Naive thymus-derived CD4-positive, alpha-beta T cell (primary cell): ENCODE measurements at regions of chr14 and their contacts with region 1.

Region 1: DNA sequence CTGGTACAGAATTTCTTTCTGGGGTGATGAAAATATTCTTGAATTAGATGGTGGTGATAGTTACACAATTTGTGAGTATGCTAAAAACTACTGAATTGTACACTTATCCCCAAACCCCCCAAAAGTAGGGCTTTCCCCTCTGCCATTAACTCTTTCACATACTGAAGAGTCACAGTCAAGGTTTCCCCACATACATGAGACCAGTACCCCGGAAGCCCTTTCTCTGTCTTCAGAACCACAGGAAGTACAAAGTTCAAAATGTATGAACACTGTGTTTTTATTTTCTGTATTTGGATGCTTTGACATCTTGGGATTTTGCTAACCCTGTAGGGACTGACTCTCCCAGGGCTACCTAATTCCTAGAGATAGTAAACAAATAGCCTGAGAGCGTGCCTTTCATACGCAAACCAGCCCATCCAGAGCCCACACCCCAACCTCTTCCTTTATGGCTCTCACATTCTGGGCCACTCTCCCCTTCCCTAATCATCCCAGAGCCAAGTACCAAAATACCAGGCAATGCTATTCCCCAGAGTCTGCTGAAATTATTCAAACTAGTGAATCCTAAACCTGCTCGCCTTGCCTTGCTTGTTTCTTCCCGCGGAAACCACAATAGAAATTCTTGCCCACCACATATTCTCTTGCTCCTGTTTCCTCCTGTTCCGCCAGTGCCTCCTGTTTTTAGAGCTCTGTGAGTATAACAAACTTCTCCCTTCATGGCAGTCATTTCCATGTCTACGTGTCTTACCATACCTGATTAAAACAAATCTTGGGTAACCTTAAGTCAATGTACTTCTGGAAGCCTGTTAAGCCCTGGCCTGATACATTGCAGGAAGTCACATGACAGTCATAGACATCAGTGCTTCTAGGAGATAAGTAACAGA is 524.8 kb downstream of the FUT8 start:
- DNase-seq: peak in 3 of 9 donors; percentile 5 to 25 (median 25)
- ATAC-seq: peak; percentile 32
- H3K4me3 ChIP-seq: no peak overlapping the region
- H3K4me3 Mint-ChIP-seq: peak overlapping the region; percentile 49 to 87 (median 80)
- H3K27ac ChIP-seq: no peak overlapping the region
- H3K27ac Mint-ChIP-seq: peak overlapping the region; percentile 76 to 95 (median 85)
- H3K4me1 ChIP-seq: peaks cover 22 to 24% of the 10 kb centered on the region in 2 donors
- H3K4me1 Mint-ChIP-seq: peaks cover 28 to 69% (median 52%) of the 10 kb centered on the region in 7 donors
- H3K27me3 ChIP-seq: no peaks in the 10 kb centered on the region
- H3K27me3 Mint-ChIP-seq: peaks cover 0 to 3% (median 0%) of the 10 kb centered on the region in 5 donors

Region 2: GRCh38 chr14:65791191-65791981 is 145.9 kb before region 1 on chr14:
- CTCF ChIA-PET with region 1: no interaction called
- POLR2A ChIA-PET with region 1: no interaction called
- intact Hi-C with region 1: no loop called
- DNase-seq: peak in 4 of 9 donors; percentile 1 to 9 (median 5)
- ATAC-seq: peak; percentile 79
- H3K4me3 ChIP-seq: no peak overlapping the region
- H3K4me3 Mint-ChIP-seq: no peak overlapping the region
- H3K27ac ChIP-seq: no peak overlapping the region
- H3K27ac Mint-ChIP-seq: no peak overlapping the region
- H3K4me1 ChIP-seq: no peaks in the 10 kb centered on the region
- H3K4me1 Mint-ChIP-seq: no peaks in the 10 kb centered on the region
- H3K27me3 ChIP-seq: no peaks in the 10 kb centered on the region
- H3K27me3 Mint-ChIP-seq: peaks cover 0 to 21% (median 5%) of the 10 kb centered on the region in 5 donors

Region 3: DNA sequence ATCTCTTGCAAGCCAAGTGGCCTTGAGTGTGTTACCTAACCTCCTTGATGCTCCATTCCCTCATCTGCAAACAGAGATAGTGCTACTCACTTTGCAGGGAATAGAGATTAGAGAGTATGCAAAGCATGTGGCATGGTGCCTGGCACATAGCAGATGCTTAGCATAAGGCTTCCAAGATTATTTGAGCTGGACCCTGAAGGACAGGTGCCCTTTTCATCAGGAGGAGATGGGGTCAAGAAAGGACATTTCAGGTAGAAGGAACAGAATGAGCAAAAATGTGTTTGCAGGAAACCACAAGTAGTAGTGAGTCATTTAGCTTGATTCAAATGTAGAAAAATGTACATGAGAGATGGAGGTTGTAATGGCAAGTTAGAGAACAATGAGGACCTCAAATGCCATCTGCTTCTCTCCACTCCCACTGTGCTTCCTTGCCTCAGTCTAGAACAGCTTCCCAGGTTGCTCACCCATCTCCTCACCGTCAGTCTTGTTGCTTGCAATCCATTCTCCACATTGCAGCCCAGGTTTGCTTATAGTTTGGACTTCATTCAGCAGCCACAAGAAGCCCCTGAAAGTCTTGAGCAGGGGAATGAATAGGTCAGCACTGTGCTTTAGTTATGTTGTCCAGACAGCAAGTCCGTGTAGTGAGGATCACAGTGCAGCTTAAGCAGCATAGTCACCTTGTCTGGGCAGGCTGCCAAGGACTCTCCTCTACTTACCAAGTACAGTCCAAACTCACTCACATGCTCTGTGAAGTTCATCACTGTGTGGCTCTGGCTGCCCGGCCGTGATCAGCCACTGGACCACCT is 12.6 kb after region 1 on chr14:
- CTCF ChIA-PET with region 1: interaction called, 5 read pairs
- POLR2A ChIA-PET with region 1: interaction called, 4 read pairs
- intact Hi-C with region 1: loop called in 1 of 2 experiments (anchors 2 kb)
- DNase-seq: peak in 1 of 9 donors; percentile 37
- ATAC-seq: no peak
- H3K4me3 ChIP-seq: no peak overlapping the region
- H3K4me3 Mint-ChIP-seq: peak overlapping the region in 5 of 10 donors; percentile 0 to 59 (median 11)
- H3K27ac ChIP-seq: no peak overlapping the region
- H3K27ac Mint-ChIP-seq: peak overlapping the region in 5 of 9 donors; percentile 28 to 85 (median 43)
- H3K4me1 ChIP-seq: peaks cover 12 to 13% of the 10 kb centered on the region in 2 donors
- H3K4me1 Mint-ChIP-seq: peaks cover 28 to 56% (median 35%) of the 10 kb centered on the region in 7 donors
- H3K27me3 ChIP-seq: no peaks in the 10 kb centered on the region
- H3K27me3 Mint-ChIP-seq: no peaks in the 10 kb centered on the region

Region 4: DNA sequence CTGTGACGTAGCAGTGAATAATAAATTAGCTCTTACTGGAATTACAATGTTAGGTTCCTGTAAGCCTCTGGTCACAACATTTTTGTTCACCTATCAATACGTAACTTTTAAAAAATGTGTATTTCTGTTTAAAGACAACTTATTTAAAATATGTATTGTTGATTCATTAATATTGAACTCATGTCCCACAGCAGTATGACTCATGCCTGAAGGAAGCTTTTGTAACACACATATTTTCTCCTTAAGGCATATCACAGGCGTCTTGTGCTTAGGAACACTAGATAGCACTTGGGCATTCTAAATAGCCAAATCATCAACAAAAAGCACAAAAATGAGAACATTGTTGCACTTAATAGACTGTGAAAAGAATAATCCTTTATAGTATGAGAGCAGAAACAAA is 663.1 kb after region 1 on chr14:
- CTCF ChIA-PET with region 1: no interaction called
- POLR2A ChIA-PET with region 1: no interaction called
- intact Hi-C with region 1: no loop called
- DNase-seq: no peak
- ATAC-seq: no peak
- H3K4me3 ChIP-seq: no peak overlapping the region
- H3K4me3 Mint-ChIP-seq: no peak overlapping the region
- H3K27ac ChIP-seq: no peak overlapping the region
- H3K27ac Mint-ChIP-seq: no peak overlapping the region
- H3K4me1 ChIP-seq: no peaks in the 10 kb centered on the region
- H3K4me1 Mint-ChIP-seq: peaks cover 0 to 9% (median 0%) of the 10 kb centered on the region in 7 donors
- H3K27me3 ChIP-seq: no peaks in the 10 kb centered on the region
- H3K27me3 Mint-ChIP-seq: no peaks in the 10 kb centered on the region